ENCODE measurements at regions of chr1 and their contacts with region 1.

Region 1: GRCh38 chr1:97920832-97921571 is at the start of gene DPYD:
- DNase-seq: peak; percentile 90
- H3K4me3 ChIP-seq: peak within 1 kb of the TSS; percentile 87
- H3K27ac ChIP-seq: peak within 1 kb of the TSS; percentile 78
- H3K4me1 ChIP-seq: peaks cover 14% of the 10 kb centered on the region
- CTCF ChIP-seq: no peak
- total RNA-seq, gene DPYD: 3.9 and 5.5 TPM in 2 replicates

Region 2: GRCh38 chr1:96721416-96722160 is 1199.4 kb before region 1 on chr1 and contains the start of gene PTBP2:
- CTCF ChIA-PET with region 1: no interaction called
- POLR2A ChIA-PET with region 1: no interaction called
- intact Hi-C with region 1: loop called (anchors 2 kb)
- DNase-seq: peak; percentile 87
- H3K4me3 ChIP-seq: peak within 1 kb of the TSS; percentile 82
- H3K27ac ChIP-seq: peak within 1 kb of the TSS; percentile 63
- H3K4me1 ChIP-seq: peaks cover 19% of the 10 kb centered on the region
- CTCF ChIP-seq: no peak
- total RNA-seq, gene PTBP2: 36.1 and 36.9 TPM in 2 replicates

Region 3: DNA sequence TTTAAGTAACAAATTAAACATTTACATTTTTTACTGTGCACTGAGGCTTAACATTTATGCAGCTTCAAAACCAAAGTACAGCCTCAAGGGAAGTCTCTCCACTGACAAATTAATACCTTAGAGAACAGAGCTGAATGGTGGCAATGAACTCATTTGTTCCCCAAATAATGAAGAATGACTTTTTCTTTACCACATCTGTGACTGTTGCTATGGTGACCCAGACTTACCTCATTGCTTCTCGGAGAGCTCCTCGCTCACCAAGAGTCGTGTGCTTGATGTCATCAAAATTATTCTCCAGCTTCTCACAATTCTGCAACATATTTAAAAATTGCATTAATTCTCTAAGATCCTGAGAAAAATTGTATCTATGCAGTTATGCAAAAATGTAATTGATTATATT is 93.1 kb before region 1 on chr1:
- CTCF ChIA-PET with region 1: no interaction called
- POLR2A ChIA-PET with region 1: no interaction called
- intact Hi-C with region 1: no loop called
- DNase-seq: no peak
- H3K4me3 ChIP-seq: no peak overlapping the region
- H3K27ac ChIP-seq: no peak overlapping the region
- H3K4me1 ChIP-seq: no peaks in the 10 kb centered on the region
- CTCF ChIP-seq: no peak